ENCODE measurements at regions of chr3 and their contacts with region 1.

Region 1: DNA sequence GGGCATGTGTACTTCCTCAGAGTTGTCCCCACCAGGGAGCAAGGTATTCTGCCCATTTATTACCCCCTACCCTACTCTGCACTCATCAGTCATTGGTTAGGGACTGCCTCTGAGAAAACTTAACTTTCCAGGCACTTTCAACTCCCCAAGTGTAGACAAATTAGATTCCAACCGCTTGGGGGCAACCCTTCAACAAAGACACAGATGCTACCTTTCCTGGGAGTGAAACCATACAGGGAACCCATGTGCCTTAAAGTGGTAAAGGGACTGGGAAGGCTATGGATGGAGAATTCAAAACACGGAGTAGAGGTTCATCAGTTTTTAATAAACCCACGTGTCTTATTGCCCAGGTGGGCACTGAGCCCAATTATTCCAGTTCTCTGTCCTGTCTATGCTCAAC is 19.4 kb upstream of the UBE2E2 start:
- DNase-seq: peak; percentile 54
- ATAC-seq: peak; percentile 98
- H3K4me3 ChIP-seq: no peak overlapping the region
- H3K27ac ChIP-seq: no peak overlapping the region
- H3K4me1 ChIP-seq: no peaks in the 10 kb centered on the region
- H3K27me3 ChIP-seq: peaks cover 5% of the 10 kb centered on the region
- CTCF ChIP-seq: peak; percentile 42 to 67 (median 66); a peak in 5 of 6 replicates
- POLR2A ChIP-seq: no peak
- RAD21 ChIP-seq: peak; percentile 84

Region 2: DNA sequence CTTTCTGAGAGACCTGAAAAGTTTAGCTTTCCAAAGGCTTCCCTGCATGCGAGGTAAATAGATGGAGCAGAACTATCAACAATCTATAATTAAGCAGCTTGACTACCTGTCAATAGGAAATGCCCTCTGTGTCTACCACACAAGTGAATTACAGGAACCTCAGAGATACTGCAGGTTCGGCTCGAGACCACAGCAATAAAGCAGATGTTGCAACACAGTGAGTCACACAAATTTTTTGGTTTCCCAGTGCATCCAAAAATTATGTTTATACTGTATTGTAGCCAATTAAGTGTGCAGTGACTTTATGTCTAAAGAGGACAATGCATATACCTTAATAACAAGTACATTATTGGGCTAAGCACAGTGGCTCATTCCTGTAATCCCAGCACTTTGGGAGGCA is 271.4 kb after region 1 on chr3:
- CTCF ChIA-PET with region 1: no interaction called
- POLR2A ChIA-PET with region 1: no interaction called
- RAD21 ChIA-PET with region 1: no interaction called
- intact Hi-C with region 1: no loop called
- DNase-seq: no peak
- ATAC-seq: no peak
- H3K4me3 ChIP-seq: no peak overlapping the region
- H3K27ac ChIP-seq: no peak overlapping the region
- H3K4me1 ChIP-seq: no peaks in the 10 kb centered on the region
- H3K27me3 ChIP-seq: no peaks in the 10 kb centered on the region; the same call in 1 of the 2 replicates
- CTCF ChIP-seq: no peak
- POLR2A ChIP-seq: no peak
- RAD21 ChIP-seq: no peak

Region 3: GRCh38 chr3:23761440-23761896 is 577.7 kb after region 1 on chr3:
- CTCF ChIA-PET with region 1: no interaction called
- POLR2A ChIA-PET with region 1: no interaction called
- RAD21 ChIA-PET with region 1: no interaction called
- intact Hi-C with region 1: loop called (anchors 5 kb)
- DNase-seq: peak; percentile 44
- ATAC-seq: peak; percentile 91
- H3K4me3 ChIP-seq: no peak overlapping the region
- H3K27ac ChIP-seq: no peak overlapping the region
- H3K4me1 ChIP-seq: peaks cover 0 to 10% of the 10 kb centered on the region in 2 experiments; a peak in 1 of 4 replicates
- H3K27me3 ChIP-seq: no peaks in the 10 kb centered on the region
- CTCF ChIP-seq: peak; percentile 53 to 57 (median 54); a peak in 5 of 6 replicates
- POLR2A ChIP-seq: no peak
- RAD21 ChIP-seq: peak; percentile 79

Region 4: GRCh38 chr3:23800731-23801130 is 617.0 kb after region 1 on chr3:
- CTCF ChIA-PET with region 1: no interaction called
- POLR2A ChIA-PET with region 1: no interaction called
- RAD21 ChIA-PET with region 1: no interaction called
- intact Hi-C with region 1: loop called (anchors 5 kb)
- DNase-seq: peak; percentile 10
- ATAC-seq: peak; percentile 55
- H3K4me3 ChIP-seq: no peak overlapping the region
- H3K27ac ChIP-seq: no peak overlapping the region
- H3K4me1 ChIP-seq: peaks cover 0 to 13% of the 10 kb centered on the region in 2 experiments; a peak in 3 of 4 replicates
- H3K27me3 ChIP-seq: no peaks in the 10 kb centered on the region
- CTCF ChIP-seq: peak in 2 of 3 experiments; percentile 12 to 26; a peak in 2 of 6 replicates
- POLR2A ChIP-seq: no peak
- RAD21 ChIP-seq: peak; percentile 67